ENCODE measurements at regions of chr17 and their contacts with region 1.

Region 1: DNA sequence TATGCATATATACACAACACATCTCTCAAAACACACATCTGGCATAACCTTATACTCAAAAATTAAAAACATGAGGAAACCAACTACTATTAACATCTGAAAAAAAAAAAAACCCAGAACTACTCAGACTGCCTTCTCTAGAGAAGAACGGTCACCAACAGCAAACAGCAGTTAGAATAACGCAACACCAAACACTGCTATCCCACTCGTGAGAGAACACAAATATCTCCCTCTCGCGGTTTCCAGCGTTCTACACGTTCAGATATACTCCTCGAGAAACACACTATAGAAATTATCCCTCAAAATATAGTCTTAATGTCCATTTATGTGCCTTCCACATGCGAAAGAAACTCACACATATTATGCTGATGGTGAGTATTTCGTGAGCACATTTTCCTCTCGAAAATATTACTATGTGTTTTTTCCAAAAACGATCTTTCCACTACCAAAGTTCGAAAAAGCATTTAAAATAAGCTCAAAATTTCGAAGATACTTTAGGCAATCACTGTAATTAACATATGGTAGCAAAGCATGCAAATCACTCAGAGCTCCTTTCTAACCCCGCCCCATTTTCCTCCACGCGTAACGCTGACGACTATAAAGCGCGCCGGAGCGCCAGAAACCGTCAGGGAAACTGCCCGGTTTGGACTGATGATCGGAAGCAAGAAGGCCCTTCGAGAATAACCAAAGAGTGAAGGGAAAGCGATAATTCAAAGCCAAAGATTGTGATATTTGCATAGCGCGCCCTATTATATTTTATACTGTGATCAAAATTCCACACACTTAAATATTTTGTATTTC is 60.1 kb downstream of the TEX14 start:
- DNase-seq: peak; percentile 94
- ATAC-seq: peak; percentile 95
- H3K4me3 Mint-ChIP-seq: no peak overlapping the region
- H3K27ac Mint-ChIP-seq: no peak overlapping the region
- H3K4me1 Mint-ChIP-seq: peaks cover 7% of the 10 kb centered on the region
- H3K27me3 Mint-ChIP-seq: no peaks in the 10 kb centered on the region
- CTCF ChIP-seq: no peak

Region 2: DNA sequence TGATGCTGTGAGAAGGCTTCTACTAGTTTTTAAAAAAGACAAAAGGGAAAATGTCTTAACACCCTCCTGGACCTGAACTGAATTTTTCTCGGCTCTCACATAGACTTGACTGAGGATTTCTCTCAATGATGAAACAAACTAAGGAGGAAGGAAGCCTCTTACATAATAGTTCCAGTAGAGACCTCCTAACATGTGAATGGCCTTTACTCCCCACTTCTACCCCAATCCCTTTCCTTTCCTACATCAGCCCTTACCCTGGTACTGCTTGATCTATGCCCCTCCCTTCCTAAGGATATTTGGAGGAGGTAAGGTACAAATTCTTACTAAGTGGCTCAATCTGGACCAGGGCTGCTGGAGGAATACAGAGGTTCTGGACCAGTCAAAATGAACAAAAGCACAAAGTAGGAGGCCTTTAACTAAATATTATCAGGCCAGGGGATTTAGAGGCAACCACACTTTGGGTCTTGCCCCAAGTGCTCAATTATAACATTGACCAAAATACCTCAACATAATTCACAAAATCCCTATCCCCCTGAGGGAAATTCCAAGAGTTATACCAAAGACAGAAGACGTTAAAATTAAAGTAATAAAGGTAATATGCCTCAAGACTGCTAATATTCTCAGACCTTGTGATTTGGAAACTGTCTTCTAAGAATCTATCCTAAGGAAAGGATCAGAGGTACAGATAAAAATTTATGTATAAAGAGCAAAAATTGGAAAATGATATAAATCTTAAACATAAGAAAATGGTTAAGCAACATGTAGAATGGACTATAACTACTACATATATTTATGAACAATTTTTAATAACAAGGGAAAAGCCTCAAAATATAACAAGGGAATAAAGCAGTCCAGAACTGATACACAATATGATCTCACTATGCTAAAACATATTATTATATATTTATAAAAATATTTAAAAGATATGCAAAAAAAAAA is 62.2 kb before region 1 on chr17:
- CTCF ChIA-PET with region 1: no interaction called
- POLR2A ChIA-PET with region 1: no interaction called
- DNase-seq: no peak
- ATAC-seq: no peak
- H3K4me3 Mint-ChIP-seq: no peak overlapping the region
- H3K27ac Mint-ChIP-seq: no peak overlapping the region
- H3K4me1 Mint-ChIP-seq: peaks cover 39% of the 10 kb centered on the region
- H3K27me3 Mint-ChIP-seq: no peaks in the 10 kb centered on the region
- CTCF ChIP-seq: no peak

Region 3: DNA sequence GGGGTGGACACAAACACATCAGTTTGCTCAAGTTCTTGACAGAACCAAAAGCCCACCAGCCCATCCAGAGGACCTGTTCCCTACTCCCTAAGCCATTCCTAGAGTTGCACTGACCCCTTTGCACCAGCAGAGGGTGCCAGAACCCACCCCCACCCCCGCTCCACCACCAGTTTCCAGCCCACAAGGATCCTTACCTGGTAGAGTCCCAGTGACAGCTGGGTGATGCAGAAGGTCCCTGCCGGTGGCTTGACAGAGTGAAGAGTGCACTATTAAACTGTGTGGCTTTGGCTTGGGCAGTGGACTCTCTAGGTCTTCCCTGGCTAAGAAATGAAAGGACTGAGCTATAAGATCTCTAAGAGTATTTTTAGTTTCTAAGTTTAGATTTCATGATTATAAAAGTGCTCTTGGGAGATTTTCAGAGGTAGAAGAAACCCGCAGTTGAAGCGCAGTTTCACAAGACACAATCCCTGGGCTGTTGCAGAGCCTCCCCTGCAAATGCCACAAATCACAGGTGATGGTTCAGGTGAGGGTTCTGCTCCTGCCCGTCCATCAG is 43.9 kb before region 1 on chr17:
- CTCF ChIA-PET with region 1: interaction called, 12 read pairs
- POLR2A ChIA-PET with region 1: interaction called, 7 read pairs
- DNase-seq: peak; percentile 77
- ATAC-seq: peak; percentile 94
- H3K4me3 Mint-ChIP-seq: no peak overlapping the region
- H3K27ac Mint-ChIP-seq: no peak overlapping the region
- H3K4me1 Mint-ChIP-seq: peaks cover 4% of the 10 kb centered on the region
- H3K27me3 Mint-ChIP-seq: no peaks in the 10 kb centered on the region
- CTCF ChIP-seq: peak; percentile 93

Region 4: DNA sequence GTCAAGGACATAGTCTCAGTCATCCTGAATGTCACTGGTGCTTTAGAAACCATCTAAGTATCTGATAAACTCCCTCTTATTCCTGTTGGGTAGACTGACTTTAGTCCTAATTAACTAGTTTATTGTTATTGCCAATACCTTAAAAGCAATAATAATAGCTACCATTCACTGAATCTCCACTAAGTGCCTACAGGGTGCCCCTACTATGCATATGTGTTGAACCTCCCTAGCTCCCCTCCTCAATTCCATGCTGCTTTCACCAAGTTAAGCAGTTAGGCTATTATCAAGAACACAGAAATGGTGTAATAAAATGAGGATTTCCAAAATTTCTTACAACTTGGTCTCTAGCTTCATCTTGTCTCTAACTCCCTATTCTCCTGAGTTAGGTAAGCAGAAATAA is 29.7 kb before region 1 on chr17:
- CTCF ChIA-PET with region 1: no interaction called
- POLR2A ChIA-PET with region 1: interaction called, 10 read pairs
- DNase-seq: no peak
- ATAC-seq: peak; percentile 75
- H3K4me3 Mint-ChIP-seq: no peak overlapping the region
- H3K27ac Mint-ChIP-seq: no peak overlapping the region
- H3K4me1 Mint-ChIP-seq: peaks cover 9% of the 10 kb centered on the region
- H3K27me3 Mint-ChIP-seq: peaks cover 12% of the 10 kb centered on the region; the same call in 1 of the 2 replicates
- CTCF ChIP-seq: no peak

Region 5: DNA sequence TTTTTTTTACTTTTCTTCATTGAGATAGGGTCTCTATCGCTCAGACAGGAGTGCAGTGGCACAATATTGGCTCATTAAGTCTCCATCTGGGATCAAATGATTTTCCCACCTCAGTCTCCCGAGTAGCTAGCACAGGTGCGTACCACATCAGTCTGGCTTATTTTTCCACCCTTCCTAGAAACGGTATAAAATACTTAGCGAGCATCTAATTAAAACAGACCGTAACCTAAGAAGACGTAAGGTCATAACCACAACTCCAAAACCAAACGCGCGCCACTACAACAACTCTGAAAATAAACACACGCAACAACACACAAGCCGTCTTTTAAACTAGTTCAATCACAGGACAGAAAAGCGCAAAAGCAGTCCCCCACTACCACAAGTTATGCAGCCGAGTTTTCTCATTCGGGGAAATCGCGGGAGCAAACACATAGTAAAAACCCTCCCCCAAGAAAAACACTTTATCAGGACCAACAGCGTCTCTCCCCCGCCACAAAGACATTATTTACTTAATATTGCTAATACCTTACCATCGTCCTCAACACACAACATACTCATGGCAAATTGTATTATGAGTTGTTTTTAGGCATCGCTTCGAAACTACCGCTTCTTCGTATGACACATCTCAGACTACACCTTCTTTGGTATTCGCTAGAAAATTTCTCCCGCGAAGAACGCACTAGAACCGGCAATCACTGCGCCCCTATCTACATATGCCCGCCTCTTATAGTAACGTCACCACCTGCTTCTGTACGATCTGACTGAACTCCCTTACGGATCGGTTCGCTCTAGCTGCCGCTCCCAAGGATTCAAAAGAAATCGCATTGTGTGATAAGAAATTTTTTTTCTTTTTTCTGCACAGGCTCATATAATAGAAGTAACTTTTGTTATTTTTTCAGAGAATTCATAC is 27.3 kb after region 1 on chr17:
- CTCF ChIA-PET with region 1: interaction called, 3 read pairs
- POLR2A ChIA-PET with region 1: interaction called, 54 read pairs
- DNase-seq: peak; percentile 52
- ATAC-seq: peak; percentile 75
- H3K4me3 Mint-ChIP-seq: peak overlapping the region; percentile 66
- H3K27ac Mint-ChIP-seq: peak overlapping the region; percentile 100
- H3K4me1 Mint-ChIP-seq: peaks cover 15% of the 10 kb centered on the region
- H3K27me3 Mint-ChIP-seq: peaks cover 14% of the 10 kb centered on the region
- CTCF ChIP-seq: no peak

Region 6: GRCh38 chr17:58703137-58703972 is 71.6 kb after region 1 on chr17:
- CTCF ChIA-PET with region 1: no interaction called
- POLR2A ChIA-PET with region 1: no interaction called
- DNase-seq: no peak
- ATAC-seq: no peak
- H3K4me3 Mint-ChIP-seq: no peak overlapping the region
- H3K27ac Mint-ChIP-seq: no peak overlapping the region
- H3K4me1 Mint-ChIP-seq: no peaks in the 10 kb centered on the region
- H3K27me3 Mint-ChIP-seq: no peaks in the 10 kb centered on the region
- CTCF ChIP-seq: no peak

Measured in WTC11 (cell line).